T-cell (primary cell): ENCODE measurements at regions of chr20 and their contacts with region 1.

Region 1: GRCh38 chr20:53915446-53916172 is 154.8 kb downstream of the BCAS1 start:
- DNase-seq: peak; percentile 79 to 98 (median 90)
- ATAC-seq: peak; percentile 92 to 98 (median 96)
- H3K4me3 ChIP-seq: peak overlapping the region; percentile 62 to 67
- H3K4me3 Mint-ChIP-seq: peak overlapping the region; percentile 88 to 91 (median 90)
- H3K27ac ChIP-seq: peak overlapping the region; percentile 62
- H3K27ac Mint-ChIP-seq: peak overlapping the region; percentile 88 to 95
- H3K4me1 ChIP-seq: peaks cover 7 to 20% of the 10 kb centered on the region in 2 experiments
- H3K4me1 Mint-ChIP-seq: peaks cover 23 to 37% (median 23%) of the 10 kb centered on the region in 3 donors
- H3K27me3 ChIP-seq: no peaks in the 10 kb centered on the region
- H3K27me3 Mint-ChIP-seq: no peaks in the 10 kb centered on the region

Region 2: GRCh38 chr20:53578492-53579222 is 337.0 kb before region 1 on chr20:
- CTCF ChIA-PET with region 1: interaction called, 8 to 34 read pairs
- POLR2A ChIA-PET with region 1: no interaction called
- DNase-seq: peak in 28 of 35 experiments; percentile 20 to 95 (median 55)
- ATAC-seq: peak; percentile 26 to 62 (median 32)
- H3K4me3 ChIP-seq: peak overlapping the region; percentile 41 to 53
- H3K4me3 Mint-ChIP-seq: peak overlapping the region; percentile 78 to 90 (median 81)
- H3K27ac ChIP-seq: peak overlapping the region; percentile 84
- H3K27ac Mint-ChIP-seq: peak overlapping the region; percentile 92 to 95
- H3K4me1 ChIP-seq: peaks cover 49 to 75% of the 10 kb centered on the region in 2 experiments
- H3K4me1 Mint-ChIP-seq: peaks cover 94 to 95% (median 94%) of the 10 kb centered on the region in 3 donors
- H3K27me3 ChIP-seq: no peaks in the 10 kb centered on the region
- H3K27me3 Mint-ChIP-seq: no peaks in the 10 kb centered on the region

Region 3: DNA sequence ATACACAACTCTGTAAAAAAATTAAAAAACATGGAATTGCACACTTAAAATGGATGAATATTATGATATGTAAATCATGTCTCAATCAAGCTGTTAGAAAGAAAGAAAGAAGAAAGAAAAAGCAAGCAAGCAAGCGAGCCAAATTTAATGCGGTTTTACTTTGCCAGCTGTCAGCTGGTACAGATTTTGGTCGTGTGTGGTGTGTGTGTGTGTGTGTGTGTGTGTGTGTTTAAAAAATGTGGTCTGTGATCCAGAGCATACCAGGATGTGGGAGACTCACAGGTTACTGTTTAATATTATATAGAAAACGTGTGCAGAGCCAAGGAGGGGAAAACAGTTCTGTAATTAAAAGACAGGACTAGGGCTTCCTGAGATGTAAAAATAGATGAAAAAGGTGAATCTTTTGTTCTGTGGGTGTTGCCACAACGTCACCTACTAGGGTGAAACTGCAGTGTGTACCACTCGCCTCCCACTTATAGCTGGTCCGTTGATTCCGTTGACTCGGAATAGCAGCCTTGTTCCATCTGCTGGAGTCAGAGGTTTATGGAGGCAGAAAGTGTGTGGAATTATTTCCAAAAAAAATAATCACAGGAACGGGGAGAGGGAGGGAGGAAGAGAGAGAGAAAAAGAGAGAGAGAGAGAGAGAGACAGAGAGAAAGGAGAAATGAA is 42.9 kb before region 1 on chr20:
- CTCF ChIA-PET with region 1: interaction called in 1 of 2 experiments, 13 read pairs
- POLR2A ChIA-PET with region 1: no interaction called
- DNase-seq: peak in 34 of 35 experiments; percentile 27 to 76 (median 54)
- ATAC-seq: peak; percentile 65 to 73 (median 69)
- H3K4me3 ChIP-seq: peak overlapping the region; percentile 38 to 44
- H3K4me3 Mint-ChIP-seq: peak overlapping the region; percentile 79 to 88 (median 83)
- H3K27ac ChIP-seq: peak overlapping the region; percentile 82
- H3K27ac Mint-ChIP-seq: peak overlapping the region; percentile 97 to 99
- H3K4me1 ChIP-seq: peaks cover 40 to 47% of the 10 kb centered on the region in 2 experiments
- H3K4me1 Mint-ChIP-seq: peaks cover 49 to 59% (median 52%) of the 10 kb centered on the region in 3 donors
- H3K27me3 ChIP-seq: no peaks in the 10 kb centered on the region
- H3K27me3 Mint-ChIP-seq: no peaks in the 10 kb centered on the region

Region 4: DNA sequence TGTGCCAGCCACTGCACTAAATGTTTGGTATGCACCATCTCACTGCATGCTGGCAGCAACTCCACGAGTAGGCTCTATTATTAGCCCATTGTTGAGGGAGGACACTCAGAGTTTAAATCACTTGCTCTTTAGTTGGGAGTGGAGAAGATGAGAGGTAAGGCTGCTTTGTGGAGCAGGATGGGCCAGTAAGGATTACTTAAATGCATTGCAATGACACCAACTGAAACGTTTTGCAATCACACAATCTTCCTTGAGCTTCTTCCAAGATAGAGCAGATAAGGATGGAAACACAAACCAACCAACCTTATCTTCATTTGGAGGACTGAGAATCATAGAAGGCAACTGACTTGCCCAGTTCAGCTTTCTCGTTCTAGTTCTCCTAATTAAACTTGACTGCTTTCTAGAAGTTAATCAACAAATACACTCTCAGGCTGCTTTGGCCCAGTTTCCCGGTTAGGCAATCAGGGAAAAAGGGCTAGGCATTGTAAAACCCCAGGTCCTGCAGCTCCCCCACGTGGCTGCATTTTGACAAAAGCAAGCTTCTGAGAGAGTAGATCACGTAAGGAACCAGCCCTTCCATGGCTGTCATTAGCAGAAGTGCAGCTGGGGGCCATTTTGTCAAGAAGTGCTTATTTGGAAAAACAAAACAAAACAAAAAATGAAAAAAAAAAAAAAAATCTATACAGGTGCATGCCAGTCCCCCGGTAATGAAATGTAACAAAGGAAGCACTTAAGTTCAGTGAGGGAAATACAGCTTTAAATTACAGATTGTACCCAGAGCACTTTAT is 24.2 kb after region 1 on chr20:
- CTCF ChIA-PET with region 1: interaction called, 6 to 19 read pairs
- POLR2A ChIA-PET with region 1: interaction called, 4 to 6 read pairs
- DNase-seq: peak; percentile 17 to 77 (median 48)
- ATAC-seq: peak; percentile 58 to 89 (median 64)
- H3K4me3 ChIP-seq: no peak overlapping the region
- H3K4me3 Mint-ChIP-seq: no peak overlapping the region
- H3K27ac ChIP-seq: no peak overlapping the region
- H3K27ac Mint-ChIP-seq: no peak overlapping the region
- H3K4me1 ChIP-seq: peaks cover 12 to 19% of the 10 kb centered on the region in 2 experiments
- H3K4me1 Mint-ChIP-seq: peaks cover 34 to 46% (median 35%) of the 10 kb centered on the region in 3 donors
- H3K27me3 ChIP-seq: no peaks in the 10 kb centered on the region
- H3K27me3 Mint-ChIP-seq: no peaks in the 10 kb centered on the region